PC-9 (cell line): ENCODE measurements at regions of chr14 and their contacts with region 1.

Region 1: GRCh38 chr14:51121096-51121495 is 26.2 kb upstream of the TRIM9 start:
- DNase-seq: no peak
- H3K4me3 ChIP-seq: no peak overlapping the region
- H3K27ac ChIP-seq: no peak overlapping the region
- H3K4me1 ChIP-seq: no peaks in the 10 kb centered on the region
- H3K27me3 ChIP-seq: no peaks in the 10 kb centered on the region
- CTCF ChIP-seq: no peak

Region 2: GRCh38 chr14:51079489-51079888 is 41.6 kb before region 1 on chr14:
- CTCF ChIA-PET with region 1: no interaction called
- POLR2A ChIA-PET with region 1: no interaction called
- intact Hi-C with region 1: no loop called
- DNase-seq: peak in 1 of 2 experiments; percentile 57
- H3K4me3 ChIP-seq: no peak overlapping the region
- H3K27ac ChIP-seq: peak overlapping the region; percentile 25
- H3K4me1 ChIP-seq: peaks cover 25% of the 10 kb centered on the region
- H3K27me3 ChIP-seq: no peaks in the 10 kb centered on the region
- CTCF ChIP-seq: no peak

Region 3: GRCh38 chr14:51109651-51110050 is 11.4 kb before region 1 on chr14:
- CTCF ChIA-PET with region 1: interaction called, 13 read pairs
- POLR2A ChIA-PET with region 1: no interaction called
- intact Hi-C with region 1: no loop called
- DNase-seq: no peak
- H3K4me3 ChIP-seq: no peak overlapping the region
- H3K27ac ChIP-seq: no peak overlapping the region
- H3K4me1 ChIP-seq: no peaks in the 10 kb centered on the region
- H3K27me3 ChIP-seq: no peaks in the 10 kb centered on the region
- CTCF ChIP-seq: no peak